GM12878 (cell line): ENCODE measurements at regions of chr17 and their contacts with region 1.

Region 1: GRCh38 chr17:48678141-48678971 is 44.0 kb downstream of the PRAC1 start:
- DNase-seq: peak; percentile 9
- ATAC-seq: peak; percentile 99
- H3K4me3 ChIP-seq: no peak overlapping the region
- H3K27ac ChIP-seq: no peak overlapping the region
- H3K4me1 ChIP-seq: 0 out of 2 replicates have a peak, but pooled peaks cover 2% of the 10 kb centered on the region
- H3K27me3 ChIP-seq: no peaks in the 10 kb centered on the region; a peak in 1 of 4 replicates
- CTCF ChIP-seq: peak; percentile 95 to 96 (median 96)
- EP300 ChIP-seq: no peak
- POLR2A ChIP-seq: no peak
- RAD21 ChIP-seq: peak; percentile 85

Region 2: GRCh38 chr17:47099987-47100711 is 1578.2 kb before region 1 on chr17:
- CTCF ChIA-PET with region 1: no interaction called
- POLR2A ChIA-PET with region 1: no interaction called
- RAD21 ChIA-PET with region 1: no interaction called
- SMC1A ChIA-PET with region 1: no interaction called
- in situ Hi-C with region 1: no loop called
- intact Hi-C with region 1: no loop called
- DNase-seq: peak; percentile 74
- ATAC-seq: peak; percentile 99
- H3K4me3 ChIP-seq: peak overlapping the region; percentile 90
- H3K27ac ChIP-seq: peak overlapping the region; percentile 71
- H3K4me1 ChIP-seq: peaks cover 8% of the 10 kb centered on the region
- H3K27me3 ChIP-seq: no peaks in the 10 kb centered on the region
- CTCF ChIP-seq: no peak
- EP300 ChIP-seq: no peak
- POLR2A ChIP-seq: peak; percentile 75
- RAD21 ChIP-seq: no peak

Region 3: GRCh38 chr17:48483471-48484131 is 194.8 kb before region 1 on chr17:
- CTCF ChIA-PET with region 1: no interaction called
- POLR2A ChIA-PET with region 1: no interaction called
- RAD21 ChIA-PET with region 1: no interaction called
- SMC1A ChIA-PET with region 1: no interaction called
- in situ Hi-C with region 1: no loop called
- intact Hi-C with region 1: no loop called
- DNase-seq: no peak
- ATAC-seq: peak; percentile 87
- H3K4me3 ChIP-seq: no peak overlapping the region
- H3K27ac ChIP-seq: no peak overlapping the region
- H3K4me1 ChIP-seq: peaks cover 19% of the 10 kb centered on the region
- H3K27me3 ChIP-seq: no peaks in the 10 kb centered on the region
- CTCF ChIP-seq: no peak
- EP300 ChIP-seq: no peak
- POLR2A ChIP-seq: no peak
- RAD21 ChIP-seq: no peak

Region 4: GRCh38 chr17:48663134-48663924 is 15.0 kb before region 1 on chr17:
- CTCF ChIA-PET with region 1: interaction called, 24 read pairs
- POLR2A ChIA-PET with region 1: no interaction called
- RAD21 ChIA-PET with region 1: no interaction called
- SMC1A ChIA-PET with region 1: interaction called, 3 read pairs
- in situ Hi-C with region 1: no loop called
- intact Hi-C with region 1: no loop called
- DNase-seq: no peak
- ATAC-seq: no peak
- H3K4me3 ChIP-seq: no peak overlapping the region
- H3K27ac ChIP-seq: no peak overlapping the region
- H3K4me1 ChIP-seq: no peaks in the 10 kb centered on the region
- H3K27me3 ChIP-seq: no peaks in the 10 kb centered on the region
- CTCF ChIP-seq: peak in 1 of 3 experiments; percentile 3; a peak in 1 of 6 replicates
- EP300 ChIP-seq: no peak
- POLR2A ChIP-seq: no peak
- RAD21 ChIP-seq: no peak

Region 5: DNA sequence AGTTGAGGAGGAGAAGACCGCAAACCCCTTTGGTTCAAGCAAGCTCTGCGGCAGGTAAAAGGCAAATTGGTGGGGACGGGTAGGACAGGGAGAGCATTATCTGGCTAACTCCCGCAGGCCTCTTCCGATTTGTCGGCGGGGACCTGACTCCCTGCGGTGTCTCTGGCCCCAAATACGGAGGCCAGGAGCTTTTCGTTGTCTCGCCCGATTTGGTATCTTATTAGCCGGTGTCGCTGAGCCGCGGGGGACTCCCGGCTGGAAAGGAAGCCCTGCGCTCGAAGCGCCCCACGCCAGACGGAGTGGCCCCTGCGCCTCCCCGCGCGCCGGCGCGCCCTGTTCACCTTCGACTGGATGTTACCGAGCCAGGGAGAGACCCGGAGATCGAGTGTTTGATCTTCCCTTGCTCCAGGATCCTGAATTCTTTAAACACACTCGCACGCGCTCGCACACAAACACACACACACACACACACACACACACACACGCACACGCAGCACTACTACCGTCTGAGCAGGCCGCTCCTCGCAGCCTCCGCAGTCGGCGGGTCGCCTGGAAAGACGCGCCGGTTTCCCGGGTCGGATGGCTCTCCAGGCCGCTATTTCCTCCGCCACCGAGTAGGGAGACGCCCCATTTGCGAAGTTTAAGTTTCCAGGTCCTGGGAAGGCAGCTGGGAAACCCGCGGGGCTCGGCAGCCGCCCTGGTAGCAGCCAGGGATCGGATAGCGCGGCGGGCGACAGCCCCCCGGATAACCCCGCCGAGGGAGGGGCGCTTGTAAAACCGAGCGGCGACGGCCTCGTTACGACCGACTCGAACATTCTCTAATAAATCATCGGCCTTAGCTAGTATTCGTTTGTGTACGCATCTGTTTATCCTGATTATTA is 40.6 kb after region 1 on chr17:
- CTCF ChIA-PET with region 1: interaction called, 56 read pairs
- POLR2A ChIA-PET with region 1: no interaction called
- RAD21 ChIA-PET with region 1: interaction called, 25 read pairs
- SMC1A ChIA-PET with region 1: interaction called, 19 read pairs
- in situ Hi-C with region 1: no loop called
- intact Hi-C with region 1: loop called (anchors 1 kb)
- DNase-seq: no peak
- ATAC-seq: no peak
- H3K4me3 ChIP-seq: no peak overlapping the region
- H3K27ac ChIP-seq: no peak overlapping the region
- H3K4me1 ChIP-seq: no peaks in the 10 kb centered on the region; the same call in 1 of the 2 replicates
- H3K27me3 ChIP-seq: peaks cover 24 to 48% of the 10 kb centered on the region in 2 experiments
- CTCF ChIP-seq: no peak
- EP300 ChIP-seq: no peak
- POLR2A ChIP-seq: no peak
- RAD21 ChIP-seq: no peak

Region 6: GRCh38 chr17:48732688-48733629 is 54.6 kb after region 1 on chr17:
- CTCF ChIA-PET with region 1: interaction called, 10 read pairs
- POLR2A ChIA-PET with region 1: no interaction called
- RAD21 ChIA-PET with region 1: no interaction called
- SMC1A ChIA-PET with region 1: no interaction called
- in situ Hi-C with region 1: no loop called
- intact Hi-C with region 1: no loop called
- DNase-seq: no peak
- ATAC-seq: no peak
- H3K4me3 ChIP-seq: no peak overlapping the region
- H3K27ac ChIP-seq: no peak overlapping the region
- H3K4me1 ChIP-seq: no peaks in the 10 kb centered on the region
- H3K27me3 ChIP-seq: peaks cover 16 to 34% of the 10 kb centered on the region in 2 experiments
- CTCF ChIP-seq: no peak
- EP300 ChIP-seq: no peak
- POLR2A ChIP-seq: no peak
- RAD21 ChIP-seq: no peak

Region 7: GRCh38 chr17:48791128-48792032 is 113.0 kb after region 1 on chr17:
- CTCF ChIA-PET with region 1: interaction called, 69 read pairs
- POLR2A ChIA-PET with region 1: interaction called, 4 read pairs
- RAD21 ChIA-PET with region 1: interaction called, 7 read pairs
- SMC1A ChIA-PET with region 1: interaction called, 4 read pairs
- in situ Hi-C with region 1: no loop called
- intact Hi-C with region 1: loop called (anchors 2 kb)
- DNase-seq: peak; percentile 57
- ATAC-seq: peak; percentile 93
- H3K4me3 ChIP-seq: no peak overlapping the region
- H3K27ac ChIP-seq: no peak overlapping the region
- H3K4me1 ChIP-seq: peaks cover 11% of the 10 kb centered on the region
- H3K27me3 ChIP-seq: no peaks in the 10 kb centered on the region; a peak in 1 of 4 replicates
- CTCF ChIP-seq: peak; percentile 49 to 57 (median 54)
- EP300 ChIP-seq: peak in 1 of 2 experiments; percentile 30; a peak in 1 of 4 replicates
- POLR2A ChIP-seq: no peak
- RAD21 ChIP-seq: peak; percentile 58

Region 8: GRCh38 chr17:48816774-48817590 is 138.6 kb after region 1 on chr17 and contains the start of gene TTLL6:
- CTCF ChIA-PET with region 1: interaction called, 39 read pairs
- POLR2A ChIA-PET with region 1: no interaction called
- RAD21 ChIA-PET with region 1: interaction called, 5 read pairs
- SMC1A ChIA-PET with region 1: interaction called, 6 read pairs
- in situ Hi-C with region 1: no loop called
- intact Hi-C with region 1: loop called (anchors 1 kb)
- DNase-seq: no peak
- ATAC-seq: peak; percentile 97
- H3K4me3 ChIP-seq: peak within 1 kb of the TSS; percentile 58
- H3K27ac ChIP-seq: no peak within 1 kb of the TSS
- H3K4me1 ChIP-seq: peaks cover 12% of the 10 kb centered on the region
- H3K27me3 ChIP-seq: peaks cover 0 to 6% of the 10 kb centered on the region in 2 experiments; a peak in 1 of 4 replicates
- CTCF ChIP-seq: no peak
- EP300 ChIP-seq: no peak
- POLR2A ChIP-seq: no peak
- RAD21 ChIP-seq: no peak
- polyA plus RNA-seq, gene TTLL6: not detected